MCF 10A (cell line): ENCODE measurements at regions of chr9 and their contacts with region 1.

Region 1: DNA sequence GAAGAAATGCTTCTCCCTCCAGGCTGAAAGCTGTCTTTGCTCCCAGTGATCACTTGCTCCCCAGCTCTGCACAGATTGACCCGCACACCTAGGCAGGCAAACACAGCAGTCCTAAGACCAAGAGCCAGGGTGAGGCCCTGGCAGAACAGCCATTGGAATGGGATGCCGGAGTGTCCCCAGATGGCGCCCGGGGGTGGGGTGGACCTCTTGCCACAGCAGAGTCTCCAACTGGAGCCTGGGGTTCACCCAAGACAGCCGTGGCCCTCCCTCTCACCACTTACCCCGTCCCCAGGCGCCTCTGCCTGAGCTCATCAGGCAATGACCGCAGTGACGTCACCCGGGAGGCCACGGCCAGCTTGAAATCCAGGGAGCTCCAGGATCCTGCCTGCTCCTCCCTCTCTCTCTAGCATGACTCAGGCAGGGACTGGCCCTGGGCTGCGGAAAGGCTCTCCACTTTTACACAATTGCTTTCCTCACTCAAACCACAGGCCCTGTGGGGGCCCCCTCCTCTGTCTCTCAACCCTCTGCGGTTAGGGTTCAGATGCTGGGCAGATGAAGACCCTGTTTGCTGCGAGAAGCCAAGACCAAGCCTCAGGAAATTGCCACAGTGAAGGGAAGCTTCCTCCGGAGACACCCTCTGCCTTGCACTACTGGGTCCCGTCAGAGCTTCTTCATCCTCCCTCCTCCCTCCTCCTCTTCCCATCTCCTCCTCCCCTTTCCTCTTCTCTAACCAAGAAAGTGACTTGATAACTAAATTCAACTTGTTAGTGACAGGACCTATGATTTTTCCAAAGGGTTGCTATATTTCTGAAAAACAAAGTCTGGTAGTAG is 24.3 kb upstream of the PTGES start:
- DNase-seq: peak; percentile 99
- H3K4me3 Mint-ChIP-seq: peak overlapping the region; percentile 58
- H3K27ac Mint-ChIP-seq: peak overlapping the region; percentile 83
- H3K4me1 Mint-ChIP-seq: peaks cover 50% of the 10 kb centered on the region
- H3K27me3 Mint-ChIP-seq: no peaks in the 10 kb centered on the region
- CTCF ChIP-seq: no peak

Region 2: DNA sequence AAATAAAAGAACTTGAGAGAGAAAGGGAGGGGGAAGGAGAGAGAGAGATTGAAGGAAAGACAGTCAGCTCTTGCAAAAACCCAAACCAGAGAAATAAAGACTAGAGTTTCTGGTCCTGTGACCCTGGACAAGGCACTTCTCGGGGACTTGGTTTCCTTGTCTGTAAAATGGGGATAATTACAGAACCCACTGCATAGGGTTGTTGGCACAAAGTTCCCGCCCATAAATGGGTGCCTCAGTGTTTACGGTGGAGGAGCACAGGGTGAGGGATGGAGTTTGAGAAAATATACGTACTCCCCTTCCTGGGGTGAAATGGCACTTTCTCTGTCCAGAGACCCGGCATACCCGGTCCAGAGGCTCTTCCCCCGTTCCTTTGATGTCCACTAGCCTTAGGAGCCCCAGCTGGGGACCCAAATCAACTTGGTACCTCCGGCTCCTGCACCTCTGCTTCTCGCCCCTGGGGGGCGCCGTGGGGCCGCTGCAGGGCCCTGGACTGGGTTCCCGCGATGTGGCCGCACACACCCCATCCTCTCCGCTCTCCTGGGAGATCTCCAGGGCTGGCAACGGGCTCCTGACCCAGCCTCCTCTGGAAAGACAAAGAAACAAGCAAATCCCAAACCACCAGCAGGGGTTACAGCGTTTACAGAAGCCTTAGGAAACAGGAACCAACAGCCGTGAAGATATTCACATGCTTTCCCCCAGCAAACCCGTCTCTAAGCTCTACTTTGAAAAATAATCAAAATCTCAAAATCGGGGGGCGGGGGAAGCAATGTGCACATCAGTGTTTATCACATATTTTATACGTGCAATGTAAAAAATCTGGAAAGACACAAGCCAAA is 50.6 kb before region 1 on chr9:
- CTCF ChIA-PET with region 1: interaction called, 105 read pairs
- POLR2A ChIA-PET with region 1: interaction called, 3 read pairs
- intact Hi-C with region 1: no loop called
- DNase-seq: peak; percentile 79
- H3K4me3 Mint-ChIP-seq: no peak overlapping the region
- H3K27ac Mint-ChIP-seq: no peak overlapping the region
- H3K4me1 Mint-ChIP-seq: no peaks in the 10 kb centered on the region
- H3K27me3 Mint-ChIP-seq: no peaks in the 10 kb centered on the region
- CTCF ChIP-seq: peak; percentile 92

Region 3: DNA sequence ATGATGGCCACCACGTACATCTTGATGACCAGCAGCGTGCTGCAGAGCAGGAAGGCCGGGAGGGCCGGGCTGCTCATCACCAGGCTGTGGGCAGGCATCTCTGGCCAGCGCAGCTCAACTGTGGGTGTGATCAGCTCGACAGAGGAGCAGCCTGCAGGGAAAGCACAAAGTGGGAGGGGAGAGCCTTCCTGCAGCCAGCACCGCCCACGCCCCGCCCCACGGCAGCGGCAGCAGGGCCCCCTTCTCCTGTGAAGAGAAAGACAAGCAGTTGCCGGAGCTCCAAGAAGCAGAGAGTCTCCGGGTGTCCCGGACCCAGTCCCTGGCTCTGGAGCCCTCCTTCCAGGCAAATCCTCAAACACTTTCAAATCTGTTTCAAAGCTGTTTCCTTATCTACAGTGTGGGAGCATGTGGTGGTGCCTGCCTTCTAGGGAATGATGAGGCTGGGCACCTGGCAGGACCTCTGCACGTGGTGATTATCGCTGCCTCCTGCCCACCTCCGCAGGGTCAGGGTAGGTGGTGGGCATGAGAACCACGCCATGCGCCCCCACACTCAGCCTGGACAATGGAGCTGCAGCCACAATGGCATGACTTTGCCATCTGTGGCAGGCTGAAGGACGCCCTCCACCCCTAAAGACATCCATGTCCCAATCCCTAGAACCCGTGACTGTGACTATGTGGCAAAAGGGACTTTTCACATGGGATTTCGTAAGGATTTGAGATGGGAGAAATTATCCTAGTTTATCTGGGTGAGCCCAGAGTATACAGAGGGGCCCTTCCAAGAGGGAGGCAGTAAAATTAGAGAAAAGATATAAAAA is 24.0 kb before region 1 on chr9 and contains the start of gene PTGES:
- CTCF ChIA-PET with region 1: interaction called, 30 read pairs
- POLR2A ChIA-PET with region 1: interaction called, 293 read pairs
- intact Hi-C with region 1: loop called (anchors 1 kb)
- DNase-seq: peak; percentile 90
- H3K4me3 Mint-ChIP-seq: peak within 1 kb of the TSS; percentile 93
- H3K27ac Mint-ChIP-seq: peak within 1 kb of the TSS; percentile 82
- H3K4me1 Mint-ChIP-seq: peaks cover 22% of the 10 kb centered on the region
- H3K27me3 Mint-ChIP-seq: no peaks in the 10 kb centered on the region
- CTCF ChIP-seq: no peak
- total RNA-seq, gene PTGES: 74.0 and 96.6 TPM in 2 replicates

Region 4: DNA sequence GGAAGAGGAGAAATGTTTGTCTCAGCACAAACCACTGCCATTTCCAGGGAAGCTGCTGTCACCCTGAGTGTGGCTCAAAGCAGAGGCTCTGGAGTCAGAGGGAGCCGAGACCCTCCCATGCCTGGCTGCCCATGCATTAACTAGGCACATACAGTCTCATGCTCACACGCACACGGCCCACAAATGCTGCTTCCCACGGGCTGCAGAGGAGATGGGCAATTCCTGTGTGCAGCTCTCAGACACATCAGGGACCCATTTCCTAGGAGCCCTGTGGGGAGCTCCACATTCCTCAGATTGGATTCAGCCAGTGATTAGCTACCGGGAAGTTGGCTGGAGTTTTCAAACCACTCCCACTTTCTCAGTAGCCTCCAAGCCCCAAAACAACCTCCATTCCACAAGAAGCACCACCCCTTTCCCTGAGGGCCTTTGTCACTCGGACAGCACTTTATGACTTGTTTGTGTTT is 15.2 kb before region 1 on chr9:
- CTCF ChIA-PET with region 1: interaction called, 4 read pairs
- POLR2A ChIA-PET with region 1: interaction called, 293 read pairs
- intact Hi-C with region 1: no loop called
- DNase-seq: peak; percentile 40
- H3K4me3 Mint-ChIP-seq: no peak overlapping the region
- H3K27ac Mint-ChIP-seq: peak overlapping the region; percentile 7
- H3K4me1 Mint-ChIP-seq: peaks cover 9% of the 10 kb centered on the region
- H3K27me3 Mint-ChIP-seq: no peaks in the 10 kb centered on the region
- CTCF ChIP-seq: no peak

Region 5: GRCh38 chr9:129938291-129938979 is 161.3 kb after region 1 on chr9:
- CTCF ChIA-PET with region 1: no interaction called
- POLR2A ChIA-PET with region 1: no interaction called
- intact Hi-C with region 1: no loop called
- DNase-seq: no peak
- H3K4me3 Mint-ChIP-seq: no peak overlapping the region
- H3K27ac Mint-ChIP-seq: no peak overlapping the region
- H3K4me1 Mint-ChIP-seq: no peaks in the 10 kb centered on the region
- H3K27me3 Mint-ChIP-seq: no peaks in the 10 kb centered on the region
- CTCF ChIP-seq: no peak

Region 6: GRCh38 chr9:130143958-130144366 is 366.8 kb after region 1 on chr9:
- CTCF ChIA-PET with region 1: no interaction called
- POLR2A ChIA-PET with region 1: no interaction called
- intact Hi-C with region 1: no loop called
- DNase-seq: peak; percentile 40
- H3K4me3 Mint-ChIP-seq: no peak overlapping the region
- H3K27ac Mint-ChIP-seq: no peak overlapping the region
- H3K4me1 Mint-ChIP-seq: peaks cover 19% of the 10 kb centered on the region
- H3K27me3 Mint-ChIP-seq: peaks cover 12% of the 10 kb centered on the region
- CTCF ChIP-seq: no peak